ENCODE measurements at regions of chr2 and their contacts with region 1.

Region 1: DNA sequence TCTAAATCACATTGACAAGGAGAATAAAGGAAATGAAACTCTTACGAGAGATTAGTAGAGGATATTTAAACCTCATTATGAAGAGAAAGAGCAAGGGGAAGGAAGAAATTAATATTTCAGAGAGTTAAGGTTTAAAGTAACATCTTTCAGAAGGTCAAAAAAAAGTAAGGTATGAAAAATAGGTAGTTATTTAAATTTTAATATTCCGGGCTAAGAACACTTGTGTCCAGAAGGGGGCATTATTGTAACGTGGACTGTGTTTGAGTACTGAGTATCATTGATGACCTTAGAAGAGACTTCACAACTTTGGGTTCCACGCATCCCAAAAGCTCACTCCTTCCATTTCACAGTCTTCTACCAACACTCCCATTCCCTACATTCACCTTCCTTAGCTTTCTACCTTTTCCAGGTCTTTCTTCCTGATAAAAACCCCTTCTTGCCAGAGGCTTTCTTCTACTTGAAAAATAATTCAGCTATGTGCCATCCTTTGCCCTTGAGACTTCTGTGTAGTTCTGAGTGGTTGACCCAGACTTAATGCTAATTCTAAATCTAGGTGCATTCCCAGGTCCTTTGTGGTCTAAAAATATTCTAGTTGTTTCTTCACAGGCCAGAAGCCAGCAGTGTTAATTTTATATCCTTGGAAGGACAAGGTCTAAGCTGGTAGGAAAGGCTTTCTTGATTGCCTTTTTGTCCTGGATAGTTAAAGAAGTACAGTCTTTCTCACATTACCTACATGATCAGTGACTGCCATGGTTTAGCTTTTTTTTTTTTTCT is 16.5 kb downstream of the DYNC1I2 start:
- DNase-seq: peak; percentile 56
- ATAC-seq: peak; percentile 68
- H3K4me3 ChIP-seq: no peak overlapping the region
- H3K27ac ChIP-seq: no peak overlapping the region
- H3K4me1 ChIP-seq: peaks cover 5% of the 10 kb centered on the region
- H3K27me3 ChIP-seq: no peaks in the 10 kb centered on the region
- CTCF ChIP-seq: peak; percentile 66
- POLR2A ChIP-seq: no peak
- RAD21 ChIP-seq: peak; percentile 72

Region 2: DNA sequence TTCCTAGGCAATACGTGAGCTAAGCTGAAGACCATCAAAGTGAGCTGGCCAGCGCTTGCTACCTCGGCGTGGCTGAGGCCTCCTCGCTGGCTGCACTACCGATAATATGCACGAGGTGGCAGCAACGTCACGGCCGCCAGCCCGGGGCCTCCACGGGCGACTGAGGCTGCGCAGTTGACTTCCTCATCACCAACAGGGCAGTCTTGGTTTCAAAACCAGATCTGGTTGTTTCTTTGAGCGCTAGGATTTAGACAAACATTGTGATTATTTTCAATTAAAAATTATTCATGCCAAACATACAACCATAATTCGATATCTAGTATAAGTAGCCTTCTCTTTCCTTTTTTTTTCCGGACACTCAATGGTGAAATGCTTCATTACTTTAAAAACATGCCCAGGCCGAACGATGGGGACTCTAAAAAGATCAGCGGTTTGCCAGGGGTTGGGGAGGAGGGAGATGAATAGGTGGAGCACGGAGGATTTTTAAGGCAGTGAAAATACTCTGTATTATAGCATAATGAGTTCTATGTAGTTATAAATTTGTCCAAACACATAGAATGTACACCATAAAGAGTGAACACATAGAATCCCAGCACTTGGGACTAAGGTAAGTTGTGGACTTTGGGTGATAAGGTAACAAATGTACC is 129.5 kb before region 1 on chr2:
- CTCF ChIA-PET with region 1: interaction called, 7 read pairs
- POLR2A ChIA-PET with region 1: no interaction called
- dilution Hi-C with region 1: no loop called
- in situ Hi-C with region 1: no loop called
- intact Hi-C with region 1: loop called (anchors 2 kb)
- DNase-seq: peak; percentile 68
- ATAC-seq: peak; percentile 100
- H3K4me3 ChIP-seq: no peak overlapping the region
- H3K27ac ChIP-seq: no peak overlapping the region
- H3K4me1 ChIP-seq: no peaks in the 10 kb centered on the region
- H3K27me3 ChIP-seq: 0 out of 2 replicates have a peak, but pooled peaks cover 5% of the 10 kb centered on the region
- CTCF ChIP-seq: peak; percentile 98
- POLR2A ChIP-seq: peak; percentile 66
- RAD21 ChIP-seq: peak; percentile 98

Region 3: GRCh38 chr2:171598713-171599319 is 104.9 kb before region 1 on chr2:
- CTCF ChIA-PET with region 1: interaction called, 5 read pairs
- POLR2A ChIA-PET with region 1: no interaction called
- dilution Hi-C with region 1: no loop called
- in situ Hi-C with region 1: no loop called
- intact Hi-C with region 1: loop called (anchors 2 kb)
- DNase-seq: peak; percentile 77
- ATAC-seq: peak; percentile 95
- H3K4me3 ChIP-seq: no peak overlapping the region
- H3K27ac ChIP-seq: no peak overlapping the region
- H3K4me1 ChIP-seq: peaks cover 3% of the 10 kb centered on the region; the same call in 1 of the 2 replicates
- H3K27me3 ChIP-seq: peaks cover 18% of the 10 kb centered on the region
- CTCF ChIP-seq: peak; percentile 77
- POLR2A ChIP-seq: no peak
- RAD21 ChIP-seq: peak; percentile 72

Region 4: GRCh38 chr2:171762879-171763573 is 59.3 kb after region 1 on chr2:
- CTCF ChIA-PET with region 1: no interaction called
- POLR2A ChIA-PET with region 1: no interaction called
- dilution Hi-C with region 1: no loop called
- in situ Hi-C with region 1: no loop called
- intact Hi-C with region 1: no loop called
- DNase-seq: peak; percentile 49
- ATAC-seq: no peak; the same call in 1 of the 2 replicates
- H3K4me3 ChIP-seq: no peak overlapping the region
- H3K27ac ChIP-seq: no peak overlapping the region
- H3K4me1 ChIP-seq: peaks cover 2% of the 10 kb centered on the region
- H3K27me3 ChIP-seq: no peaks in the 10 kb centered on the region
- CTCF ChIP-seq: no peak
- POLR2A ChIP-seq: no peak
- RAD21 ChIP-seq: no peak